SK-N-SH (cell line): ENCODE measurements at regions of chr1 and their contacts with region 1.

Region 1: GRCh38 chr1:43073490-43074230 is 98.4 kb downstream of the EBNA1BP2 start:
- DNase-seq: peak; percentile 81
- H3K4me3 ChIP-seq: no peak overlapping the region; a peak in 1 of 4 replicates
- H3K27ac ChIP-seq: no peak overlapping the region
- H3K4me1 ChIP-seq: peaks cover 0 to 10% of the 10 kb centered on the region in 2 experiments; a peak in 1 of 4 replicates
- H3K27me3 ChIP-seq: no peaks in the 10 kb centered on the region
- CTCF ChIP-seq: peak; percentile 82
- EP300 ChIP-seq: no peak
- RAD21 ChIP-seq: peak; percentile 99

Region 2: GRCh38 chr1:42777852-42778251 is 295.8 kb before region 1 on chr1:
- CTCF ChIA-PET with region 1: interaction called, 118 read pairs
- POLR2A ChIA-PET with region 1: no interaction called
- DNase-seq: peak; percentile 75
- H3K4me3 ChIP-seq: no peak overlapping the region
- H3K27ac ChIP-seq: no peak overlapping the region
- H3K4me1 ChIP-seq: no peaks in the 10 kb centered on the region
- H3K27me3 ChIP-seq: no peaks in the 10 kb centered on the region
- CTCF ChIP-seq: peak; percentile 73
- EP300 ChIP-seq: no peak
- RAD21 ChIP-seq: peak; percentile 89

Region 3: DNA sequence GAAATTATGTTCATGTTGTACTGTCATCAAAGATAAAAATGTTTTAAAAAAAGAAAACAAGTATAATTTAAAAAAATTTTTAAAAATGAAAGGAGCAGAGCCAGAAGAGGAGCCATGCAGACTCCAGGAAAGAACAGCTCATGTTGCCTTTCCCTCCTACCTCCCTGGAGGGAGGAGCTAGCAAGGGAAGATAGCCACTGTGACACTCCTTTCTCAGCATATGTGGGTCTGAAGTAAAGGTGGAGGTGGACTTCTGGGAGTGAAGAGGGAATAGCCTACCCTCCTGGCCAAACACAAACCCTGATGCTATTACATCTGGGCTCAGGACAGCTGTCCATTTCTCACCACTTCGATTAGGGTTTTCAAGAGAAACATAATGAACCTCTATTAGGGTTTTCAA is 169.2 kb before region 1 on chr1:
- CTCF ChIA-PET with region 1: interaction called, 14 read pairs
- POLR2A ChIA-PET with region 1: no interaction called
- DNase-seq: no peak
- H3K4me3 ChIP-seq: no peak overlapping the region
- H3K27ac ChIP-seq: no peak overlapping the region
- H3K4me1 ChIP-seq: no peaks in the 10 kb centered on the region
- H3K27me3 ChIP-seq: no peaks in the 10 kb centered on the region; the same call in 1 of the 2 replicates
- CTCF ChIP-seq: no peak
- EP300 ChIP-seq: no peak
- RAD21 ChIP-seq: no peak

Region 4: GRCh38 chr1:42936309-42937078 is 137.2 kb before region 1 on chr1:
- CTCF ChIA-PET with region 1: interaction called, 50 read pairs
- POLR2A ChIA-PET with region 1: interaction called, 3 read pairs
- DNase-seq: no peak
- H3K4me3 ChIP-seq: no peak overlapping the region
- H3K27ac ChIP-seq: peak overlapping the region; percentile 10 to 43; a peak in 2 of 4 replicates
- H3K4me1 ChIP-seq: peaks cover 21 to 30% of the 10 kb centered on the region in 2 experiments; a peak in 3 of 4 replicates
- H3K27me3 ChIP-seq: no peaks in the 10 kb centered on the region
- CTCF ChIP-seq: no peak
- EP300 ChIP-seq: no peak
- RAD21 ChIP-seq: no peak

Region 5: GRCh38 chr1:42971841-42972291 is 101.8 kb before region 1 on chr1:
- CTCF ChIA-PET with region 1: interaction called, 15 read pairs
- POLR2A ChIA-PET with region 1: no interaction called
- DNase-seq: no peak
- H3K4me3 ChIP-seq: no peak overlapping the region
- H3K27ac ChIP-seq: peak overlapping the region in 1 of 2 experiments; percentile 44; a peak in 2 of 4 replicates
- H3K4me1 ChIP-seq: peaks cover 8 to 17% of the 10 kb centered on the region in 2 experiments; a peak in 3 of 4 replicates
- H3K27me3 ChIP-seq: no peaks in the 10 kb centered on the region
- CTCF ChIP-seq: no peak
- EP300 ChIP-seq: 0 out of 4 replicates have a peak, but pooled peaks of 1 of the 2 experiments have one; percentile 24
- RAD21 ChIP-seq: no peak

Region 6: DNA sequence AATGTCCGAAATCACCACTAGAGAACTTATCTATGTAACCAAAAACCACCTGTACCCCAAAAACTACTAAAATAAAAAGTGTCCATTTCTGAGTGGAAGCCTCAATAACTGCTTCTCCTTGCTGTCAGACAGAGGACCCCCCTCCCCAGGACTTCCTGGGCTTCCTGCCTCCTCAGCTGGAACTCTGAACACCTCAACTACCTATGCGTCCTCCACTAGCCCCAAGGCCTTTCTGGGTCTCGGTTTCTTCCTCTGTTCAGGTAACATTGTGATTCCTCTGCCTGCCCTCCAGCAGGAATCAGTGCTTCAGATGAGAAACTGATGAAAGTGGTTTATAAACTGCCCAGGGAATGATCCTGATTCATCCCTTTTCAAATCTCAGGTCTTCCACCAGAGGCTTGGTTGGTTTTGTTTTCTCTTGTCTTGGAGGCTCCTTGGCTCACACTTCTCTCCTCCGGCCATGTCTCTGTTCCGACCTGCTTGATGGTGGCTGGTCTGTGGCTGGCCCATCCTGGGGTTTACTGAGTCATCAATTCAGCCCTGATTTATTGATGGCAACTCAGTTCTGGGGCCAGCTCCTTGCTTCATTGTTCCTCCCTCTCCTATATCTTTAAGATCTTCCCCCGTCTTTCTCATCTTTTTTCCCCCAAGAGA is 58.5 kb before region 1 on chr1:
- CTCF ChIA-PET with region 1: no interaction called
- POLR2A ChIA-PET with region 1: no interaction called
- DNase-seq: no peak
- H3K4me3 ChIP-seq: no peak overlapping the region
- H3K27ac ChIP-seq: no peak overlapping the region
- H3K4me1 ChIP-seq: no peaks in the 10 kb centered on the region
- H3K27me3 ChIP-seq: peaks cover 11% of the 10 kb centered on the region; the same call in 1 of the 2 replicates
- CTCF ChIP-seq: no peak
- EP300 ChIP-seq: no peak
- RAD21 ChIP-seq: no peak

Region 7: GRCh38 chr1:43058545-43059355 is 14.9 kb before region 1 on chr1:
- CTCF ChIA-PET with region 1: interaction called, 52 read pairs
- POLR2A ChIA-PET with region 1: interaction called, 3 read pairs
- DNase-seq: peak; percentile 55
- H3K4me3 ChIP-seq: no peak overlapping the region
- H3K27ac ChIP-seq: peak overlapping the region in 1 of 2 experiments; percentile 74; a peak in 2 of 4 replicates
- H3K4me1 ChIP-seq: peaks cover 0 to 22% of the 10 kb centered on the region in 2 experiments; a peak in 1 of 4 replicates
- H3K27me3 ChIP-seq: no peaks in the 10 kb centered on the region
- CTCF ChIP-seq: no peak
- EP300 ChIP-seq: no peak
- RAD21 ChIP-seq: no peak; the same call in 1 of the 2 replicates